Activated CD4-positive, alpha-beta memory T cell treated with anti-CD3 and anti-CD28 coated beads for 36 hours (primary cell): ENCODE measurements at regions of chr7 and their contacts with region 1.

Region 1: DNA sequence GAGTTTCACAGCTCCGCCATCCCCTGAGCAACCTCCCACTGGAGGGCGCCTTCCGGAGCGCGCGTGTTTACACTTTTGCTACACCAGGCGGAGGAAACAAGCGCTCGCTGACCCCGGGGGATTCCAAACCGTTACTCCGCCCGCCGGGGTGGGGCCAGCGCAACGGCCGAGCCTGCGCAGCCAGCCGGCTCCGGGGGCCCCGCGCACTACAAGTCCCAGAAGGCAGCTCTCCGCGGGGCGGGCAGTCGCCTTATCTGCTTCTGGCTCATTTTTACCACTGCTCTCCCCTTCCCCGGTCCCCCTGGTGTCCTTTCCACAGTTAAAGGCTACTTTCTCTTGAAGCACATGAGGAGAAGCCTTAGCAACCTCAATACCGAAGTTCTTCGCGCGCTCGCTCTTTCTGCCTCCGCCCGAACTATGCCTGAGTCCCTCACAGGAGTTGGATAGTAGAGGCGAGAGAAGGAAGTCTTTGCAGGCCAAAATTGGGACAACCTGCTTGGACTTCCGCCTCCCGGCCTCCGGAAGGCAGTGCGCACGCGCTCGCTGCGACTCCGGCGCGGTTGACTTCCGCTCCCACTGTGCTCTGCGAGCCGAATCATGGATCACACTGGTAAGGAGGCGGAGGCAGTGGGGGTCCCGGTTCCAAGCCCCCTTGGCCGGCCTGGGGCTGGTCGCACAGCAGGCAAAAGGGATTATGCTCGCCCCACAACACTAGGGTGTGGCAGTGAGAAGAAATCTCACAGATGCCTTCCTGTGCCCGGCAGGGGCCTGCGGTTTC is at the start of gene CBLL1:
- DNase-seq: peak; percentile 99
- H3K4me3 Mint-ChIP-seq: peak within 1 kb of the TSS; percentile 97
- H3K27ac Mint-ChIP-seq: peak within 1 kb of the TSS; percentile 100
- H3K4me1 Mint-ChIP-seq: peaks cover 49% of the 10 kb centered on the region
- H3K27me3 Mint-ChIP-seq: no peaks in the 10 kb centered on the region
- total RNA-seq, gene CBLL1: 38.7 to 40.4 TPM

Region 2: GRCh38 chr7:107462740-107463444 is 280.9 kb before region 1 on chr7:
- CTCF ChIA-PET with region 1: interaction called, 19 read pairs
- POLR2A ChIA-PET with region 1: no interaction called
- intact Hi-C with region 1: no loop called
- DNase-seq: peak; percentile 61
- H3K4me3 Mint-ChIP-seq: no peak overlapping the region
- H3K27ac Mint-ChIP-seq: no peak overlapping the region
- H3K4me1 Mint-ChIP-seq: no peaks in the 10 kb centered on the region
- H3K27me3 Mint-ChIP-seq: no peaks in the 10 kb centered on the region

Region 3: DNA sequence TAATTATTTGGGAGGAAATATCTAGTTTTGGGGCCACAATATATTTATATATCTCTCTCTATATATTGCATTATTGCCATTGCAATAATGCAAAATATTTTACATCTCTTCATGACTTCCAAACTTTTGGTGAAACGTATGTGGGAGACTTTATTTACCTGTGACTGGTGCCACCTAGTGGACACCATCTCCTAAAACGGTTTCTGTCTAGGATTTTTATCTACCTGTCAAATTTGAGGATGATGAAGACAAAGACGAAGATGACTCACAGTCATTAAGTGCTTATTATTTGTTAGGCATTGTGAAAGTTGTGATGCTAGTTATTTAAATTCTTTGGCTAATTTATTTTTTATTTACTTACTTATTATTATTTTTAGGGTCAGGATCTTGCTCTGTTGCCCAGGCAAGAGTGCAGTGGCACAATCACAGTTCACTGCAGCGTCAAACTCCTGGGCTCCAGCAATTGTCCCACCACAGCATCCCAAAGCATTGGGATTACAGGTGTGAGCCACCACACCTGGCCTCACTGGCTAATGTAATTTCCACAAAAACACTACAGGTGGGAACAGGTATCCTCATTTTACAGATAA is 18.5 kb before region 1 on chr7:
- CTCF ChIA-PET with region 1: interaction called, 23 read pairs
- POLR2A ChIA-PET with region 1: no interaction called
- intact Hi-C with region 1: no loop called
- DNase-seq: peak; percentile 42
- H3K4me3 Mint-ChIP-seq: no peak overlapping the region
- H3K27ac Mint-ChIP-seq: no peak overlapping the region
- H3K4me1 Mint-ChIP-seq: no peaks in the 10 kb centered on the region
- H3K27me3 Mint-ChIP-seq: peaks cover 3% of the 10 kb centered on the region

Region 4: GRCh38 chr7:107865956-107866775 is 122.4 kb after region 1 on chr7:
- CTCF ChIA-PET with region 1: interaction called, 333 read pairs
- POLR2A ChIA-PET with region 1: interaction called, 3 read pairs
- intact Hi-C with region 1: loop called (anchors 2 kb)
- DNase-seq: peak; percentile 54
- H3K4me3 Mint-ChIP-seq: no peak overlapping the region
- H3K27ac Mint-ChIP-seq: peak overlapping the region; percentile 79
- H3K4me1 Mint-ChIP-seq: peaks cover 26% of the 10 kb centered on the region
- H3K27me3 Mint-ChIP-seq: no peaks in the 10 kb centered on the region

Region 5: GRCh38 chr7:108569381-108570145 is 825.8 kb after region 1 on chr7 and contains the starts of genes DNAJB9 and THAP5:
- CTCF ChIA-PET with region 1: no interaction called
- POLR2A ChIA-PET with region 1: no interaction called
- intact Hi-C with region 1: loop called (anchors 5 kb)
- DNase-seq: peak; percentile 100
- H3K4me3 Mint-ChIP-seq: peak within 1 kb of the TSS; percentile 98
- H3K27ac Mint-ChIP-seq: peak within 1 kb of the TSS; percentile 99
- H3K4me1 Mint-ChIP-seq: peaks cover 43% of the 10 kb centered on the region
- H3K27me3 Mint-ChIP-seq: no peaks in the 10 kb centered on the region
- total RNA-seq, gene DNAJB9: 10.8 to 12.6 TPM
- total RNA-seq, gene THAP5: 26.5 to 30.4 TPM